Sigmoid colon (tissue), 7 donors: ENCODE measurements at regions of chr10 and their contacts with region 1.

Region 1: GRCh38 chr10:28241741-28242399 is 61.0 kb downstream of the MPP7 start:
- DNase-seq: no peak
- H3K4me3 ChIP-seq: no peak overlapping the region
- H3K27ac ChIP-seq: no peak overlapping the region
- H3K4me1 ChIP-seq: peaks cover 0 to 24% (median 13%) of the 10 kb centered on the region in 4 donors
- H3K27me3 ChIP-seq: no peaks in the 10 kb centered on the region
- CTCF ChIP-seq: peak; percentile 69 to 95 (median 90)
- EP300 ChIP-seq: no peak
- POLR2A ChIP-seq: no peak

Region 2: GRCh38 chr10:27679369-27679912 is 562.4 kb before region 1 on chr10:
- intact Hi-C with region 1: loop called (anchors 5 kb)
- DNase-seq: no peak
- H3K4me3 ChIP-seq: no peak overlapping the region
- H3K27ac ChIP-seq: peak overlapping the region; percentile 39 to 73 (median 62)
- H3K4me1 ChIP-seq: peaks cover 0 to 54% (median 49%) of the 10 kb centered on the region in 4 donors
- H3K27me3 ChIP-seq: no peaks in the 10 kb centered on the region
- CTCF ChIP-seq: no peak
- EP300 ChIP-seq: no peak
- POLR2A ChIP-seq: no peak